PC-3 (cell line): ENCODE measurements at regions of chr6 and their contacts with region 1.

Region 1: GRCh38 chr6:33299237-33299944 is 649 bp upstream of the RGL2 start:
- DNase-seq: peak; percentile 93
- ATAC-seq: peak; percentile 55
- H3K4me3 ChIP-seq: peak overlapping the region; percentile 78
- H3K27ac ChIP-seq: peak overlapping the region; percentile 92
- H3K4me1 ChIP-seq: peaks cover 15% of the 10 kb centered on the region
- H3K27me3 ChIP-seq: no peaks in the 10 kb centered on the region
- CTCF ChIP-seq: peak; percentile 87

Region 2: DNA sequence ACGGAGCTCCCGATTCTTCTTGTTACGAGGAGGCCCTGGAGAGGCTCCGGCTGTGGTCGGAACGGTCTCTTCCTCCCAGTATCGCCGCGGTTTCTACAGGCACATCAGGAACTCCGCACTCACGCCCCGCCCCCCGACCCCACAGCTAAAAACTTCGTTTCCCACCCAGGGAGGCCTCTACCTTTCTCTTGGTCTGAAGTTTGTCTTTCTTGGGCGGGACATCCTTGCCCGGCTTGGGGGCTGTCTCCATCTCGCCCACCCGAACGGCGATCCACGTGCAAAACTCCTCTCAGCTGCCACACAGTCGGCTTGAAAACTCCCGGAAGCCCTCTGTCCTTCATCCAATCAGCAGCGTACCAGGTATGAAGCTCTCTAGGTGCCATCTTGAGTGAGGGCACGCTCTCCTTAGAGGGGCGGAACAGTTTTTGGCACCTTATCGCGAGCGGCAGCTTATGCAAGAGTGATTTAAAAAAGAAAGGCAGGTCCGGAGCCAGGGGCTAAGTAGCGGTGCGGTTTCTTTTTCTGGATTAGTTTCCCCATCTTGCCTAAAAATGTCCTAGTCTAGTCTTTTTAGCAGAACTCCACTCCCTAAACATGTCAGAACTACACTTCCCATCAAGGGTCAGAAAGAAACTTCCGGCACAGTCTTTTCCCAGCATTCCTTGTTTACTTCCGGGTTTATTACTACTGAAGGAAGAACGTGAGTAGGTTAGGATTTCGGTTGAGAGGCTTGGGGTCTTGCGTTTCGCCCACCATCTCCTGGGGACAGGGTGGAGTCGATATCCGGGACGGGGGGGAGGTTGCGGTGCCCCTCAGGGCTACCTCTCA is 10.3 kb before region 1 on chr6 and contains the starts of genes PFDN6 and WDR46:
- CTCF ChIA-PET with region 1: no interaction called
- POLR2A ChIA-PET with region 1: interaction called, 7 read pairs
- intact Hi-C with region 1: loop called (anchors 1 kb)
- DNase-seq: peak; percentile 88
- ATAC-seq: peak; percentile 95
- H3K4me3 ChIP-seq: peak within 1 kb of the TSS; percentile 97
- H3K27ac ChIP-seq: peak within 1 kb of the TSS; percentile 6
- H3K4me1 ChIP-seq: peaks cover 17% of the 10 kb centered on the region
- H3K27me3 ChIP-seq: no peaks in the 10 kb centered on the region
- CTCF ChIP-seq: no peak
- total RNA-seq, gene PFDN6: 153 and 181 TPM in 2 replicates
- total RNA-seq, gene WDR46: 104 and 146 TPM in 2 replicates

Region 3: GRCh38 chr6:33323623-33323948 is 24.2 kb after region 1 on chr6:
- CTCF ChIA-PET with region 1: no interaction called
- POLR2A ChIA-PET with region 1: interaction called, 28 read pairs
- intact Hi-C with region 1: no loop called
- DNase-seq: no peak
- ATAC-seq: no peak
- H3K4me3 ChIP-seq: peak overlapping the region; percentile 95
- H3K27ac ChIP-seq: peak overlapping the region; percentile 48; the same call in 1 of the 2 replicates
- H3K4me1 ChIP-seq: peaks cover 45% of the 10 kb centered on the region
- H3K27me3 ChIP-seq: no peaks in the 10 kb centered on the region
- CTCF ChIP-seq: no peak

Region 4: GRCh38 chr6:33410050-33410710 is 110.8 kb after region 1 on chr6:
- CTCF ChIA-PET with region 1: no interaction called
- POLR2A ChIA-PET with region 1: no interaction called
- intact Hi-C with region 1: loop called (anchors 5 kb)
- DNase-seq: peak; percentile 98
- ATAC-seq: peak; percentile 93
- H3K4me3 ChIP-seq: peak overlapping the region; percentile 91
- H3K27ac ChIP-seq: peak overlapping the region; percentile 71
- H3K4me1 ChIP-seq: peaks cover 9% of the 10 kb centered on the region; the same call in 1 of the 2 replicates
- H3K27me3 ChIP-seq: no peaks in the 10 kb centered on the region
- CTCF ChIP-seq: no peak